ENCODE measurements at regions of chr20 and their contacts with region 1.

Region 1: DNA sequence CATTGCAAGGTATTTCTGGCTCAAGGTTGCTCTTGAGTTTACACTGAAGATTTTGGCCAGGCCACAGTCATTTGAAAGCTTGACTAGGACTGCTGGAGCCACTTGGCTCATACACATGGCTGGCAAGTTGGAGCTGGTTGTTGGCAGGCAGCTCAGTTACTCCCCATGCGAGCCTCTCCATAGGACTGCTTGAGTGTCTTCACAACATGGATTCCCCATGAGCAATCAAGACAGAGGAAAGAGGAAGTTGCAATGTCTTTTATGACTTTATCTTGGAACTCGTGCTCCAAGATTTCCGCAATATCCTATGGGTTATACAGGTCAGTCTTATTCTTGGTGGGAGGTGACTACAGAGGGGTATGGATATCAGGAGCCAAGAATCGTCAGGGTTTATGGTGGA is 1.4 kb upstream of the MANBAL start:
- DNase-seq: peak in 1 of 9 experiments; percentile 19
- ATAC-seq: no peak
- H3K4me3 ChIP-seq: no peak overlapping the region
- H3K4me3 Mint-ChIP-seq: peak overlapping the region; percentile 81
- H3K27ac ChIP-seq: no peak overlapping the region
- H3K27ac Mint-ChIP-seq: no peak overlapping the region
- H3K4me1 ChIP-seq: peaks cover 15% of the 10 kb centered on the region
- H3K4me1 Mint-ChIP-seq: peaks cover 30% of the 10 kb centered on the region
- H3K27me3 ChIP-seq: no peaks in the 10 kb centered on the region
- H3K27me3 Mint-ChIP-seq: peaks cover 3% of the 10 kb centered on the region
- CTCF ChIP-seq: no peak

Region 2: GRCh38 chr20:37298190-37298939 is 10.3 kb after region 1 on chr20:
- CTCF ChIA-PET with region 1: interaction called, 3 read pairs
- POLR2A ChIA-PET with region 1: interaction called, 10 read pairs
- intact Hi-C with region 1: no loop called
- DNase-seq: no peak
- ATAC-seq: no peak
- H3K4me3 ChIP-seq: no peak overlapping the region
- H3K4me3 Mint-ChIP-seq: no peak overlapping the region
- H3K27ac ChIP-seq: no peak overlapping the region
- H3K27ac Mint-ChIP-seq: no peak overlapping the region
- H3K4me1 ChIP-seq: peaks cover 13% of the 10 kb centered on the region
- H3K4me1 Mint-ChIP-seq: peaks cover 53% of the 10 kb centered on the region
- H3K27me3 ChIP-seq: no peaks in the 10 kb centered on the region
- H3K27me3 Mint-ChIP-seq: no peaks in the 10 kb centered on the region
- CTCF ChIP-seq: no peak

Region 3: DNA sequence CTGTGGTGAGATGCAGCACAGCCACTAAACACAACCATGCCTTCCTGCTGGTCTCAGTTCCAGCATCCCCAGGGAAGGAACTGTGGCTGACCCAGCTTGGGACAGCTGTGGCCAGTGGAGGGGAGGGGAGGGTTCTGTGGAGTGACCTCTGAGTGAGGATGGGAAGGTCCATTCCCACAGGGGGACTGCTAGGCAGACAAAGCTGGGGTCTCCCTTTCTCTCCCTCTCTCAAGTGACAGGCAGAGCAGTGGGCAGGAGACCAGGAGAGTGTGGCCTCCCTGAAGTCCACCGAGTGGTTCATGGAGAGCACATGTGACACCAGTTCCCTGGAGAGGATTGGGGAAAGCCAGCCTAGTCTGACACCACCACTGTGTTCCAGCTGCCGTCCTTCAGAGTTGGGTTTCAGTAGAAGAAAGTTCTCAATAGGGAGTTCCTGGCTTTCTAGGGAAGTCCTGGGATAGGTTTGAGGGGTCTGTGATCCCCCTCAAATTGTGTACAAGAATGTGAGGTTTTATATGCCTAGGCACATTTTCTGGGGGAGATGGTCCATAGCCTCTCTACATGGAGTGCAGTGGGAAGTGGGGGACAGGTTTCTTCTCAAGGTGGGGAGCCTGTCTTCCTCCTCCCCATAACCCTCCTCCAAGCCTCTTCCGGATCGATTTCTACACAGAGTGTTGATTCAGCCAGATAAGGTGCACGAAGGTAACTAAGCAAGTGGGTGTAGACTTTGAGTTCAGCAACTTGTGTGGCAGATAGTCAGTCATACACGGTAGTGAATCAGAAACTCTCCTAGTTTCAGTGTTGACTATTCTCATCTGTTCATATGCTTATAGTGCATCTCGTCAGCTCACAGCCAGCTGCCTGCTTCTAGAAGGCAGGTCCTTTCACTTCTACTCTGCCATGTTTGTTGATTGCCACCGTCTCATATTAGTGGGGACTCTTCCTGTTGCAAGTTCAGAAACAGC is 20.3 kb after region 1 on chr20:
- CTCF ChIA-PET with region 1: no interaction called
- POLR2A ChIA-PET with region 1: no interaction called
- intact Hi-C with region 1: no loop called
- DNase-seq: no peak
- ATAC-seq: no peak
- H3K4me3 ChIP-seq: no peak overlapping the region
- H3K4me3 Mint-ChIP-seq: no peak overlapping the region
- H3K27ac ChIP-seq: no peak overlapping the region
- H3K27ac Mint-ChIP-seq: peak overlapping the region; percentile 52
- H3K4me1 ChIP-seq: no peaks in the 10 kb centered on the region
- H3K4me1 Mint-ChIP-seq: peaks cover 8% of the 10 kb centered on the region
- H3K27me3 ChIP-seq: no peaks in the 10 kb centered on the region
- H3K27me3 Mint-ChIP-seq: no peaks in the 10 kb centered on the region
- CTCF ChIP-seq: no peak

Region 4: DNA sequence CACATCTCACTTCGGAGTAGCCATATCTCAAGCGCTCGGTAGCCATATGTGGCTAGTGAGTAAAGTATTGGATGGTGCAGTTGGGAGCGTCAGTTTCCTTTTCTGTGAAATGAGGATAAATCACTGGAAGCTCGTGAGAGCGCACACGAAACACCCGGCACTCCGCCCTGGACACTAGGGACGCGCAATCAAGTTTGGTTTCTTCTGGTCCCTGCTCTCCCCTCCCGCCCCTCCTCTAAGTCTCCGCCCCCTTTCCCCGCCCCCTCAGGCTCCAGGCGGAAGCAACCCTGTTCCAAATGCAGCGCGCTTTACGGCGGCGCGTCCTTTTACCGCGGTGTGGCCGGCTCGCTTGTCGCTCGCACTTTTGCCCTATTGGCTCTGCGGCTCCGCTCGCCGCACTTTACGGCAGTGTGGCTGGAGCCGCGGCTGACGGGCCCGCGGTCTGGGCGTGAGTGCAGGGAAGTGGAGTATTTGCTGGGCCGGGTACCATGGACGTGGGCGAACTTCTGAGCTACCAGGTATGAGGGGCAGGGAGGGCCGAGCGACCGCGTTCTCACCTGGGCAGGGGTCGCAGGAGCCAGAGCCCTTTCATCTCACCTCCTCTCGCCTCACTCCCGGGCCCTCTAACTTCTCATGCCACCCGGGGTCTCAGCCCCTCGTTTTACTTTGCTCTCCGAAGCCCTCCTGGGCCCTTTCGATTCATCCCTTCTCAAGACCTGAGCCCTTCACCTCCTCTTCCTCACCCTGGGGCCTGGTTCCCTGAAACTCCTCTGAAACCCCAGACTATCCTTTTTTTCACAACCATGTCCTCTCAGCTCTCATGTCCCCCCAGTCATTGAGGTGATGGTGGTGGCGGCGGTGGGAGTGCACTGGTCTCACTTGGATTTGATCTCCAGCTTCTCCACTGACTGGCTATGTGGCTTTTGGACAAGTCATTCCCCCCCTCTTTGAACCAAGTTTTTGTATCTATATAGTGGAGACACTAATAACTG is 405.8 kb after region 1 on chr20 and contains the start of gene CTNNBL1:
- CTCF ChIA-PET with region 1: no interaction called
- POLR2A ChIA-PET with region 1: no interaction called
- intact Hi-C with region 1: loop called in 1 of 2 experiments (anchors 5 kb)
- DNase-seq: peak; percentile 91 to 98 (median 96)
- ATAC-seq: peak; percentile 99
- H3K4me3 ChIP-seq: peak within 1 kb of the TSS; percentile 76 to 85
- H3K4me3 Mint-ChIP-seq: peak within 1 kb of the TSS; percentile 98
- H3K27ac ChIP-seq: peak within 1 kb of the TSS; percentile 60 to 61
- H3K27ac Mint-ChIP-seq: peak within 1 kb of the TSS; percentile 90
- H3K4me1 ChIP-seq: peaks cover 12% of the 10 kb centered on the region
- H3K4me1 Mint-ChIP-seq: peaks cover 43% of the 10 kb centered on the region
- H3K27me3 ChIP-seq: peaks cover 0 to 7% of the 10 kb centered on the region in 2 experiments
- H3K27me3 Mint-ChIP-seq: peaks cover 16% of the 10 kb centered on the region
- CTCF ChIP-seq: no peak
- total RNA-seq, gene CTNNBL1: 22.4 to 26.8 TPM

Measured in CD8-positive, alpha-beta T cell (primary cell).